Activated CD4-positive, alpha-beta T cell treated with anti-CD3 and anti-CD28 coated beads for 36 hours (primary cell): ENCODE measurements at regions of chr16 and their contacts with region 1.

Region 1: GRCh38 chr16:72124761-72125634 is 31.4 kb downstream of the DHX38 start:
- DNase-seq: peak; percentile 82
- ATAC-seq: peak; percentile 77
- H3K4me3 Mint-ChIP-seq: no peak overlapping the region
- H3K27ac Mint-ChIP-seq: no peak overlapping the region
- H3K4me1 Mint-ChIP-seq: peaks cover 3% of the 10 kb centered on the region
- H3K27me3 Mint-ChIP-seq: no peaks in the 10 kb centered on the region

Region 2: DNA sequence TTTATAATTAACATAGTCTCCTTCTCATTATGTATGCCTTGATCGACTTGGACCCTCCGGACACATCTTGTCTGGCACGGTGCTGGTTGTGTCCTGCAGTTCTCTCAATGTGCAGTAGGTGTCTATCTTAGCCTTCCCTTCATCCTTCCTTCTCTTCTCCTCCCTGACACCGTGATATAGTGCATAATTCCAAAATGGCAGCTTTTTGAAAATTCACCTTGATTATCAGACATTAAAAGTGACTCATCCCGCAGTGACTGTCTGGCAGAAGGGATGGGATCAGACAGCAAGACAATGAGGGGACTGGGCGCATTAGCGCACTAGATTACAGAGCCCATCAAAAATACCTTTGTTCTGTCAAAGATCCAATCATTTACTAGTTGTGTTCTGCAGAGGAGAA is 116.9 kb after region 1 on chr16:
- CTCF ChIA-PET with region 1: interaction called, 3 read pairs
- POLR2A ChIA-PET with region 1: no interaction called
- intact Hi-C with region 1: loop called in 1 of 2 experiments (anchors 10 kb)
- DNase-seq: no peak
- ATAC-seq: peak; percentile 42
- H3K4me3 Mint-ChIP-seq: no peak overlapping the region
- H3K27ac Mint-ChIP-seq: no peak overlapping the region
- H3K4me1 Mint-ChIP-seq: peaks cover 4% of the 10 kb centered on the region
- H3K27me3 Mint-ChIP-seq: peaks cover 4% of the 10 kb centered on the region

Region 3: DNA sequence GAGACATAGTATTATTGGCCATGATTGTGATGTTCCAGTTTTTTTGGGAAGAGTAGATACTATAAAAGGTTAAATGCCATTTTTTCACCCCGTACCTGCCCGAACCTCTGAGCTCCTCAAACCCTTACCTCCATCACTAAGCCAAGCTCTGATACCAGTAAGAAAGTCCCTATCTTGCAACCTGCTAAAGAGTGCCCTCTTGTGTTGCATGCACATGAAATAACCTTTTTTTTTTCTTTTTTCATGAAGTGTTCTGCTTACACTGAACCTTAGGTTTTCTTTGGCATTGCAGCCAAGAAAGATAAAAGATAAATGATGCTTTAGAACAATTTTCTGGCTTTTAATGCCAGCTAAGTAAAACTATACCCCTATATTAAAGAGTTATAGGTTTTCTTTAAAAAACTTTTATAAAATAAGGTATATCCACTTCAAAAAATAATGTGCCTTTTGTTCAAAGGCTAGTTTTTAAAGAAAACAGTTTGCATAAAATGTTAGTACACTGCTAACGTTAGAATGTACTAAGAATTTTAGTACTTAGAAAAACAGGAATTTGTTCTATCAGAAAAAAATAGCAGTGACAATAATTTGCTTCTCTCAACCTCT is 342.3 kb after region 1 on chr16:
- CTCF ChIA-PET with region 1: interaction called, 11 read pairs
- POLR2A ChIA-PET with region 1: no interaction called
- intact Hi-C with region 1: loop called (anchors 1 kb)
- DNase-seq: no peak
- ATAC-seq: peak; percentile 51
- H3K4me3 Mint-ChIP-seq: no peak overlapping the region
- H3K27ac Mint-ChIP-seq: no peak overlapping the region
- H3K4me1 Mint-ChIP-seq: peaks cover 4% of the 10 kb centered on the region
- H3K27me3 Mint-ChIP-seq: no peaks in the 10 kb centered on the region

Region 4: GRCh38 chr16:72818236-72818845 is 693.3 kb after region 1 on chr16:
- CTCF ChIA-PET with region 1: no interaction called
- POLR2A ChIA-PET with region 1: no interaction called
- intact Hi-C with region 1: no loop called
- DNase-seq: no peak
- ATAC-seq: no peak
- H3K4me3 Mint-ChIP-seq: no peak overlapping the region
- H3K27ac Mint-ChIP-seq: no peak overlapping the region
- H3K4me1 Mint-ChIP-seq: no peaks in the 10 kb centered on the region
- H3K27me3 Mint-ChIP-seq: peaks cover 9% of the 10 kb centered on the region

Region 5: DNA sequence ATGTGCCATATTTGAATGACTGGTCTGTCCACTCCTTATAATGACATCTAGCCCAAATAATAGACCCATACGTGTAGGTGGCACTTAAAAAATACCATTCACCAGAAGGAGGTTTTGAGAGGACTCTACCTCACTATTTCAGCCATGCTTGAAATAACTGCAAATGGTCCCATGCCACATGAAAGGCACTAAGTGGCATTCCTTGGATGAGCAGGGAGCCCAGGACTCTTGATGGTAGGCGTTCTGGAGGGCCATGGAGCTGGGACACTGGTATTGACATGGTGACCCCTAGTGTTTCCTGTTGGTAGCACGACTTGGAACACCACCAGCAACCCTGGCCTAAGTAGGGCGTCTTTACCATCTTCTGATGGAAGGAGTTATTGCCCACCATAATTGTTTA is 1071.7 kb after region 1 on chr16:
- CTCF ChIA-PET with region 1: no interaction called
- POLR2A ChIA-PET with region 1: no interaction called
- intact Hi-C with region 1: loop called in 1 of 2 experiments (anchors 10 kb)
- DNase-seq: peak; percentile 45
- ATAC-seq: no peak
- H3K4me3 Mint-ChIP-seq: no peak overlapping the region
- H3K27ac Mint-ChIP-seq: no peak overlapping the region
- H3K4me1 Mint-ChIP-seq: no peaks in the 10 kb centered on the region
- H3K27me3 Mint-ChIP-seq: no peaks in the 10 kb centered on the region

Region 6: GRCh38 chr16:73878611-73879010 is 1753.6 kb after region 1 on chr16:
- CTCF ChIA-PET with region 1: no interaction called
- POLR2A ChIA-PET with region 1: no interaction called
- intact Hi-C with region 1: loop called in 1 of 2 experiments (anchors 2 kb)
- DNase-seq: no peak
- ATAC-seq: no peak
- H3K4me3 Mint-ChIP-seq: no peak overlapping the region
- H3K27ac Mint-ChIP-seq: no peak overlapping the region
- H3K4me1 Mint-ChIP-seq: no peaks in the 10 kb centered on the region
- H3K27me3 Mint-ChIP-seq: peaks cover under 1% of the 10 kb centered on the region

Region 7: GRCh38 chr16:73956587-73957494 is 1831.8 kb after region 1 on chr16:
- CTCF ChIA-PET with region 1: no interaction called
- POLR2A ChIA-PET with region 1: no interaction called
- intact Hi-C with region 1: loop called in 1 of 2 experiments (anchors 10 kb)
- DNase-seq: peak; percentile 62
- ATAC-seq: no peak
- H3K4me3 Mint-ChIP-seq: no peak overlapping the region
- H3K27ac Mint-ChIP-seq: no peak overlapping the region
- H3K4me1 Mint-ChIP-seq: no peaks in the 10 kb centered on the region
- H3K27me3 Mint-ChIP-seq: peaks cover 5% of the 10 kb centered on the region